GM10248 (cell line): ENCODE measurements at regions of chr16 and their contacts with region 1.

Region 1: GRCh38 chr16:67672739-67673662 is 6.4 kb downstream of the C16orf86 start:
- DNase-seq: peak; percentile 84
- CTCF ChIP-seq: peak; percentile 80

Region 2: DNA sequence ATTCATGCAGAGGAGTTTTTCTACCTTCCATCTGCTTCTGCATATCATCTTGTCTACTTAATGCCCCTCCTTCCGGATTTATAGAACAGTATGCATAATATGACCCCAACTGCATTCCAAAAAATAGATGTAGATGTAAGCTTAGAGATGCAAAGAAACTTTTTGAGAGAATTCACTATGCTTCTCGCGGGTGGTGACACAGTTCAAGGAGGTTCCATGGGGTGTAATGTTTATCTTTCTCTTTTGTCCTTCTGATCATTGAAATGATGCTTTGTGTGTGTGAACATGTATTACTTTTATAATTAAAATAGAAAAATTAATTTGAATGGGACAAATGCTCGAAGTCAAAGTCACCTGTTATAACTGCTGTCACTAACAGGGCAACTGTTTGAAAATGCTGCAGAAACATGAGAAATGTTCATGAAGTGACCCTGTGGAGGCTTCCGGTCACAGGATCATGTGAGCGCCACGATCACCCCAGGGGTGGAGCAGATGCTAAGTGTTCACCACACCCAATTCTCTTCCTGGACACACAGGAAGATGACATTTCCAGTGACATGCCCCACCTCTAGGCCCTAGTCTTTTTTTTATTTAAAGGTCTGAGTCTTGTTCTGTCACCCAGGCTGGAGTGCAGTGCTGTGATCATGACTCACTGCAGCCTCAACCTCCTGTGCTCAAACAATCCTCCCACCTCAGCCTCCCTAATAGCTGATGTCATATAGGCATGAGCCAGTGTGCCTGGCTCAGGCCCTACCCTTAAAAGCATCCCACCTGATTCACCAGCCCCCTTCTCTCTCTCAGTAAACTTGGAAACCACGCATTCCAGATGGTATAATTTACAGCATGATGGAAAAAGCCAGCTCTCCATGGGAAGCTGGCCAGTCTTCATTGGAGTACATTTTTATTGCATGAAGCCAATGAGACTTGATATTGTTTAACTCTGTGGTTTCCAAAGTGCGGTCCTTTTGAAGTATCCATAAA is 168.7 kb before region 1 on chr16:
- CTCF ChIA-PET with region 1: no interaction called
- POLR2A ChIA-PET with region 1: no interaction called
- DNase-seq: peak; percentile 61
- CTCF ChIP-seq: no peak

Region 3: DNA sequence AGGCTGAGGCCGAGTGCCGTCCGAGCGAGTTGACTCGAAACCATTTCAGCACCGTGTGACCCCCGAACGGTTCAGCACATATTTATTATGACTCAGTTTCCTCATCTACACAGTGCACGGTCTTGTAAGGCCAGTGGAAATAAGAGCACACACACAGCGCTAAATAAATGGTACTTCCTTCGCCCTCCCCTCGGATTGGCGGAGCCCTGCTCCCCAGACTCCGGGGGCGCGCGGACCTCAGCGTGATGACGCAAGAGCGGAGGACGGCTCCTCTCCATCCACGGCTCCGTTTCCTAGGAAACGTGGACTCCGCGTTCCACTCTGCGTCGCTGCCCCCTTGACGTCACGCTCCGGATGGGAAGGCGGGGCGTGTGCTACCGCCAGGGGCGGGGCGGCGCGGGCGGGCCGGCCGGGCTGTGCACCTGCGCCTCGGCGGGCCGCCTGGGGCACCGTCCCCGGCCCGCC is 12.4 kb before region 1 on chr16 and contains the start of gene PARD6A:
- CTCF ChIA-PET with region 1: interaction called, 53 read pairs
- POLR2A ChIA-PET with region 1: no interaction called
- DNase-seq: peak; percentile 100
- CTCF ChIP-seq: no peak

Region 4: DNA sequence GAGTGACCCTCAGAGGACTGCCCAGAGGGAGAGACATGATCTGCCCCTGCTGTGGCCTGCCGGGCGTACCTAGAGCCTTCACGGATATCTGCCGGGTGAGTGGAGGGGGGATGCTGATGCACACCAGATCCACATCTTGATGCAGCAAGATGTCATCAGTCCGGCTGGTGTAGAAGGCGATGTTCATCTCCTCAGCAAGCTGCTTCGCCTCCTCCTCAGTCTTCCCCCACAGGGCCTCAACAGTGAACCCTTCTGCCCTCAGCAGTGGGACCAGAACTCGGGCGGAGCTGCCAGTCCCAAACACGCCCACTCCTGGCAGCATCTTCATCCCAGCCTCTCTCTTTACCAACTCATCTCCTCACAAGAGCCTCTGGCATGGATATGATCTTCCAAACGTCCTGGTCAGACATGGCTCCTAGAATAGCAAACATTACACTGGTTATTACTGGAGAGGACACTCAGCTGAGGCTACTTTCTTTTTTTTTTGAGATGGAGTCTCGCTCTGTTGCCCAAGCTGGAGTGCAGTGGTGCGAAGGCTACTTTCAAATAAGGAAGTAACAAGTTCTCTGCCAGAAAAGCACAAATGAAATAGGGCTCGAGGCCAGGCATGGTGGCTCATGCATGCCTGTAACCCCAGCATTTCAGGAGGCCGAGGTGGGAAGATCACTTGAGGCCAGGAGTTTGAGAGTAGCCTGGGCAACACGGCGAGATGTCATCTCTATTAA is 12.5 kb after region 1 on chr16:
- CTCF ChIA-PET with region 1: interaction called, 72 read pairs
- POLR2A ChIA-PET with region 1: interaction called, 3 read pairs
- DNase-seq: peak; percentile 37
- CTCF ChIP-seq: no peak

Region 5: DNA sequence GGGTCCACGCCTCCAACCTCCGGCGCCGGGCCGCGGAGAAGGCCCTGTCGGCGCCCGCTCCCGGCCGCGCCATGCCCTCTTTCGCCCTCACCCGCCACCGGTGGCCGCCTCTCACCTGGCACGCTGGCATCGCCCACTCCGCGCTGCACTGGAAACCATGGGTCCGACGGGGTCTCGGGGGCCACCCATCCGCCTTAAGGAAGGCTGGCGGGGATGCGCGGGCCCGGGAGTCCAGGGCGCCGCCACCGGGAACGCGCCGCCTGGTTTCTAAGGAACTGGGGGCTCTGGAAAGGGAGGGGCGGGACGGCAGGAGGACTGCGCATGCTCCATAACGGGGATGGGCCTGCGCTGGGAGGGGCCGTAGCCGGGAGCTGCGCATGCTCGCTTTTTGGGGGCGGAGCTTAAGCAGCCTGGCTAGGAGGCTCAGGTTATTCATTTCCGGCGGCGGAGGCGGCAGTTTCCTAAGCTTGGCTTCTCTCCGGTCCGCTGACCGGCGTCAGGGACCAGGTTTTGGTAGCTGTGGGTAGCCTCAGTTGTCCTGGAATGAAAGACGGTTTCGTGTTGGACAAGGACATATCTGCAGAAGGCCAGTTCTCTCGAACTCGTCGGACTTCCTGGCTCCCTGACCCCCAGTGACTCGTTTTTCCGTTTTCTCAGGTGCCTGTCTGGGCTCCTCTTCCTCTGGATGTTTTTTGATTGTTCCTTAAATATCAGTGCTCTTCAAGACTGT is 46.2 kb after region 1 on chr16 and contains the start of gene GFOD2:
- CTCF ChIA-PET with region 1: interaction called, 13 read pairs
- POLR2A ChIA-PET with region 1: no interaction called
- DNase-seq: peak; percentile 100
- CTCF ChIP-seq: no peak

Region 6: DNA sequence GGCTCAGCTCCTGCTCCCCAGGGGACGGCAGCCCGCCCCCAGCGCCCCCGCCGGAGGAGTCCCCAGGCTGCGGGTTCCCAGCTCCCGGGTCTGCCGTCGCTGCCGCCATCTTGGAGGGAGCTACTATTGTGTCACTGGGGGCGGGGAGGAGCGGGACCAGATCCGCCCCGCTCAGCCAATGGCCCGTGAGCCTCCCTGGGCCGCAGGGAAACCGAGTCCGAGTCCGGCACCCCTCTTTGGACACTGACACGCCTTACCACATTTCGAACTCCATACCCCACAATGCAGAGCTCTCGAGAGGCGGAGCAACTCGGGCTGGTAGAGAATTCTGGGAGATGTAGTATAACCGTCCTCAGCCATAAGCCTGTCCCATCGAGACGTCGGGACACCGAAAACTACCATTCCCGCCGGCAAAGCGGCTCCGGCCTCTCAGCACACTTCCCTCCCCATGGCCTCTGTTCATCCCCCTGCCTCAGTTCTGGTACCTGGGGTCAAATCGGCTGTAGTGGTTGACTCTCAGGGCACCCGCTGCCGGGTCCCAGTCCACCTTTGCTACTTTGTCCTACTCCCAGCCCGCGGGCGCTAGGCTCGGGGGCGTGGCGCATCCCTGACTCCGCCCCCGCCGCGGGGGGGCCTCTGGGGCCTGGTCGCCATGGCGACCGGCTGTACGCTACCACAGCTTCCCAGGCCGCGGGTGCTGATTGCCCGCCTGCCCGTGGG is 133.6 kb after region 1 on chr16 and contains the starts of genes RANBP10 and TSNAXIP1:
- CTCF ChIA-PET with region 1: interaction called, 11 read pairs
- POLR2A ChIA-PET with region 1: interaction called, 3 read pairs
- DNase-seq: peak; percentile 96
- CTCF ChIP-seq: no peak

Region 7: GRCh38 chr16:67928561-67929364 is 255.8 kb after region 1 on chr16:
- CTCF ChIA-PET with region 1: interaction called, 38 read pairs
- POLR2A ChIA-PET with region 1: interaction called, 10 read pairs
- DNase-seq: peak; percentile 89
- CTCF ChIP-seq: peak; percentile 97

Region 8: GRCh38 chr16:67935402-67936123 is 262.6 kb after region 1 on chr16:
- CTCF ChIA-PET with region 1: interaction called, 38 read pairs
- POLR2A ChIA-PET with region 1: no interaction called
- DNase-seq: peak; percentile 99
- CTCF ChIP-seq: no peak